Activated CD4-positive, alpha-beta T cell treated with anti-CD3 and anti-CD28 coated beads for 36 hours (primary cell): ENCODE measurements at regions of chr9 and their contacts with region 1.

Region 1: GRCh38 chr9:112037281-112038016 is 137.6 kb downstream of the SUSD1 start:
- DNase-seq: peak; percentile 82
- ATAC-seq: peak; percentile 95
- H3K4me3 Mint-ChIP-seq: no peak overlapping the region
- H3K27ac Mint-ChIP-seq: peak overlapping the region; percentile 74
- H3K4me1 Mint-ChIP-seq: peaks cover 64% of the 10 kb centered on the region
- H3K27me3 Mint-ChIP-seq: peaks cover 11% of the 10 kb centered on the region

Region 2: DNA sequence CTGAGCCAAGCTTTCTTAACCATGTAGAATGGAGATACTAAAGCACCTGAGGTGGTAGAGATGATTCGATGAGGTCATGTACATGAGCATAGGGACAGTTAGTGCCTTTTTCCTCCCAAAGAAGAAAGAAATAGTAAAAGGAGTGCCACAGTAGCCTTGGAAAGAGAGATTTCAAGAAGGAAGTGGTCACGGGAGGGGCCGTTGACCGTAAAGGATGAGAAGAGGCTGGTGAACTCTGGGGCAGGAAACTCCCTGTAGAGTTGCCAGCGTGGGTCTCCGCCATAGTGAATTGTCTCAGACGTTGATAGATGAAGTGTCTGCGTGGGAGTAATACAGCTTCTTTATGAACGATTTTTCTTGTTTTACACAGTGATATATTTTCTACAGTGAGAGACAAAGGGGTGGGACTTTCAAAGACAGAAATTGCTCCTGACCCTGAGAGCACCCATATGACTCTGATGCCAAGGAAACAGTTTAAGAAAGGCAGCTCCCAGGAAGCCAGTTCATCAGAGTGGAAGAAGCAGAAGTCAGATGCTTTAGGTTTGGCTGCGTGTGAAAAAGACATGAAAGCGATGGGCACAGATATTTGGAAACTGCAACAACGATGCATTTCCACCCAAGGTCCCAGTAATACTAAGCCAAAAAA is 99.5 kb before region 1 on chr9:
- CTCF ChIA-PET with region 1: no interaction called
- POLR2A ChIA-PET with region 1: no interaction called
- intact Hi-C with region 1: loop called in 1 of 2 experiments (anchors 1 kb)
- DNase-seq: peak; percentile 83
- ATAC-seq: peak; percentile 92
- H3K4me3 Mint-ChIP-seq: peak overlapping the region; percentile 44
- H3K27ac Mint-ChIP-seq: peak overlapping the region; percentile 86
- H3K4me1 Mint-ChIP-seq: peaks cover 23% of the 10 kb centered on the region
- H3K27me3 Mint-ChIP-seq: no peaks in the 10 kb centered on the region

Region 3: GRCh38 chr9:111965566-111966019 is 71.9 kb before region 1 on chr9:
- CTCF ChIA-PET with region 1: no interaction called
- POLR2A ChIA-PET with region 1: no interaction called
- intact Hi-C with region 1: loop called in 1 of 2 experiments (anchors 1 kb)
- DNase-seq: peak; percentile 34
- ATAC-seq: peak; percentile 95
- H3K4me3 Mint-ChIP-seq: no peak overlapping the region
- H3K27ac Mint-ChIP-seq: no peak overlapping the region
- H3K4me1 Mint-ChIP-seq: peaks cover 15% of the 10 kb centered on the region
- H3K27me3 Mint-ChIP-seq: peaks cover 4% of the 10 kb centered on the region

Region 4: DNA sequence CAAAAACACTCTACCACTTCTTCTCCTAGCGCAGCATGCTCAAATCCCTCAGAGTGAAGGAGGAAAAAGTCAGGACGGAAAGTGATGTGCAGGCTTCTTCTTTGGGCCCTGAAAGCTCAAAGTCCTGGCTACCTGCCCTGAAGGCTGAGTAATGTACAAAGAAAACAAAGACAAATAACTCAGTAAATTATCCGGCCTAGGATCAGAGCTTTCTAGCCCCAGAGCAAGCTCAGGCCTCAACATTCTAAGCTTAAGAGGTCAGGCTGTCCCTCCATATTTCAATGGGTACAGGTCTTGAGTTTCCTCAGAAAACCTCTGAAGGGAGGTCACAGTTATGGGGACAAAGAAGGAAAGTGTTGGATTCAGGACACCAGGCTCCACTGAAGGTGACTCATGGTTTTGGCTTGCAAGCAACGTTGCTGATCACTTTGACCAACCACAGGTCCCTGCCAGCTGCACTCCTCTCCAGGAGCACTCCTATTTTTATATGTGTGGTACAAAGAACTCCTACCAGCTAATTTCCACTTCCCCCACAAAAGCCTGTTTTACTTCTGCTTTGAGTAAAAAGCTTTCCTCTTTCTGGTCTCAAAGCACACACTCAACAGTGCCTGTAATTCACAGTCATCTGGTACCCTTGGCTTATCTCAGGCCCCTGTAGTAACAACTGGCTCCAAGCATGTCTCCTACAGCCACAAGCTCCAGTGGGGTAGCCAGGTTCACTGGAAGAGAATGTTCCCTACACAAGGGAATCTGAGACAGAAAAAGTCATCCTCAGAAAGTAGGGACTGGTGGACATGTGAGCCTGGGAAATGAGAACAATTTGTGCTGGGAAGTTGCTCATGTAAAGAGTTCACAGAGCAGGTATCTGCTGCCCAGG is 25.2 kb before region 1 on chr9:
- CTCF ChIA-PET with region 1: interaction called, 3 read pairs
- POLR2A ChIA-PET with region 1: interaction called, 3 read pairs
- intact Hi-C with region 1: loop called (anchors 1 to 2 kb)
- DNase-seq: peak; percentile 43
- ATAC-seq: peak; percentile 97
- H3K4me3 Mint-ChIP-seq: no peak overlapping the region
- H3K27ac Mint-ChIP-seq: peak overlapping the region; percentile 27
- H3K4me1 Mint-ChIP-seq: peaks cover 34% of the 10 kb centered on the region
- H3K27me3 Mint-ChIP-seq: peaks cover 17% of the 10 kb centered on the region

Region 5: GRCh38 chr9:112074250-112075008 is 37.0 kb after region 1 on chr9:
- CTCF ChIA-PET with region 1: interaction called, 4 read pairs
- POLR2A ChIA-PET with region 1: no interaction called
- intact Hi-C with region 1: loop called (anchors 1 to 5 kb)
- DNase-seq: peak; percentile 81
- ATAC-seq: peak; percentile 85
- H3K4me3 Mint-ChIP-seq: no peak overlapping the region
- H3K27ac Mint-ChIP-seq: peak overlapping the region; percentile 72
- H3K4me1 Mint-ChIP-seq: peaks cover 35% of the 10 kb centered on the region
- H3K27me3 Mint-ChIP-seq: peaks cover 4% of the 10 kb centered on the region